Activated T-helper 1 cell treated with anti-CD3 and anti-CD28 coated beads, Interleukin-12 subunit alpha, Interleukin-12 subunit beta, Interleukin-2, Interleukin-4 antibody, amounts not matched to agents 30 ng/mL and 10 ng/mL and 1 ng/mL, durations not matched to agents 14 hours and 24 hours and 36 hours (primary cell): ENCODE measurements at regions of chrX and their contacts with region 1.

Region 1: DNA sequence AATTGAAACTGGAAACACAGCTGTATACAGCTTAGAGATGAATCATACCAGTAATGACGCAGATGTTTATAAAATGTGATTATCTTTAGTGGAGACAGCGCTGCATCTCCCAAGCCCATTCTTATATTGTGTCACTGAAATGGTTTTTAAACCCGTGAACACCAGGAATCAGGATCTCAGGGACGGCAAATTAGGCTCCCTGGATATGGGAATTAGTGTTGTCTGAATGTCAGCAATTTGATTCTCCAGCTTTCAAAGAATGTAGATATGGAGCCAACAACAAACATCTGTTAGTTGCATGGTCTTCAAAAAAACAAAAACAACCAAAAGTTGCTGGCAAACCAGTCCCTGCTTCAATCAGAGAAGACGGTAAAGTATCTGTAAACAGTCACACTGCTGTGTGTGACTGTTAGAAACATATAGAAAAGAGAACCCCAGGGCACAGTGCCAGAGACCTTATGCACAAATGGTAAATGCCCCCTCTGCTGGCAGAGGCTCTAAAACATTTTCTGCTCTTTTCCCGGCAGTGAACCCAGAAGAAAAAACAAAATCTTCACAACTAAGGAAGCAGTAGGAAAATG is 351.9 kb upstream of the FTHL17 start:
- DNase-seq: no peak
- H3K4me3 Mint-ChIP-seq: no peak overlapping the region
- H3K27ac Mint-ChIP-seq: no peak overlapping the region
- H3K4me1 Mint-ChIP-seq: no peaks in the 10 kb centered on the region
- H3K27me3 Mint-ChIP-seq: peaks cover 4% of the 10 kb centered on the region

Region 2: DNA sequence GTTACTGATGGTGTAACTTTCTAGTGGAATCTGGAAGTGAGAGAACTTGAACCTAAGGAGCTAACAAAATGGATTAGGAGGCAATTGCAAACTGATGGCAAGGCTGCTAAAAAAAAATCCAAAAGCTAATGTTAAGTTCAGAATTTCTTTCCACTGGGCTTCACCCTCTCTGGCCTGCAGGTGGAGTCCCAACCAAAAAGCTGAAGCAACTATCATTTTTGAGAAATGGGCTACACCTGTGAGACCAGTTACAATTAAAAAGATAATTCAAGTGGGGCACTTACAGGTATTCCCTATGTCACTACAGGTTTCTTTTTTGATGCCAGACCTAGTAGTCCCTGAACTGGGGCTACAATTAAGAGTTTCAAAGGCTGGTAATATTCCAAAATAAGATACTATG is 209.8 kb before region 1 on chrX:
- intact Hi-C with region 1: loop called (anchors 2 kb)
- DNase-seq: no peak
- H3K4me3 Mint-ChIP-seq: no peak overlapping the region
- H3K27ac Mint-ChIP-seq: no peak overlapping the region
- H3K4me1 Mint-ChIP-seq: peaks cover 16% of the 10 kb centered on the region
- H3K27me3 Mint-ChIP-seq: no peaks in the 10 kb centered on the region